ENCODE measurements at regions of chr12 and their contacts with region 1.

Region 1: DNA sequence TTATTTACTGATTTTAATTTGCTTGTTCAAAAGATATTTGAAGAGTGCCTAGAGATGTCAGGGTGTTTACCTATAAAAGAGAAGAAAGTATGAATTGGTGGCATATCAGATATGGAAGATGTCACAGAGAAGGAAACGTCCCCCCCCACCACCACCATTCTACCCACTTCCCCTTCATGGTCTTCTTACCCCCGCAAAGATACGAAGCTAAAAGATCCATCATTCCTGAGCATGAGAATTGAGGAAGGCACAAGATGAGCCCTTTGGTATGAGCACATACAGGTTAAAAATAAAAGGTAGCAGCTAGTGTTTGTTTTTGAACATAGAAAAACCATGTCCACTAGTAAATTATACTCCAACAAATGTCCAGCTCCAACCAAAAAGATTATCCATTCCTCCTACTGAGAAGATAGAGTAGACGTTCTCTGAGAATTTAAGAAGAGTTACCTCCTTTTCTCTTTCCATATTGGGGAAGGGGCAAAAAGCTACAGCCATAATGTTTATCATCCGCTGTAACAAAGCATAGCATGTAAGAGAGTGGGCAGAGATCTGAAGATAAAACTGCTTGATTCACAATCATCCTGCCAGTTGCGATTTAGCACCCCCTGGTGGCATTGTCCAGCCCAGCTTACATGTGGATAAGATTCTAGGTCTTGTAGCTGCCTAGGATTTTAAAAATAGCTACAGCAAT is 29.1 kb downstream of the NFYB start:
- DNase-seq: peak; percentile 76 to 85 (median 77)
- H3K4me3 ChIP-seq: no peak overlapping the region
- H3K4me3 Mint-ChIP-seq: no peak overlapping the region
- H3K27ac ChIP-seq: no peak overlapping the region
- H3K27ac Mint-ChIP-seq: peak overlapping the region in 3 of 7 donors; percentile 47 to 80 (median 49)
- H3K4me1 ChIP-seq: peaks cover 6% of the 10 kb centered on the region
- H3K4me1 Mint-ChIP-seq: peaks cover 10 to 17% (median 12%) of the 10 kb centered on the region in 4 donors
- H3K27me3 ChIP-seq: no peaks in the 10 kb centered on the region
- H3K27me3 Mint-ChIP-seq: no peaks in the 10 kb centered on the region

Region 2: GRCh38 chr12:103495479-103496456 is 613.1 kb before region 1 on chr12 and contains the start of gene C12orf42:
- CTCF ChIA-PET with region 1: no interaction called
- POLR2A ChIA-PET with region 1: no interaction called
- intact Hi-C with region 1: loop called (anchors 5 kb)
- DNase-seq: peak; percentile 44 to 59 (median 53)
- H3K4me3 ChIP-seq: peak within 1 kb of the TSS; percentile 31 to 51
- H3K4me3 Mint-ChIP-seq: peak within 1 kb of the TSS; percentile 77 to 93 (median 82)
- H3K27ac ChIP-seq: peak within 1 kb of the TSS; percentile 31
- H3K27ac Mint-ChIP-seq: peak within 1 kb of the TSS; percentile 22 to 86 (median 71)
- H3K4me1 ChIP-seq: peaks cover 9% of the 10 kb centered on the region
- H3K4me1 Mint-ChIP-seq: peaks cover 12 to 16% (median 15%) of the 10 kb centered on the region in 4 donors
- H3K27me3 ChIP-seq: peaks cover 4% of the 10 kb centered on the region
- H3K27me3 Mint-ChIP-seq: peaks cover 10 to 12% of the 10 kb centered on the region in 2 donors
- total RNA-seq, gene C12orf42: 8.4 to 12.8 TPM

Region 3: DNA sequence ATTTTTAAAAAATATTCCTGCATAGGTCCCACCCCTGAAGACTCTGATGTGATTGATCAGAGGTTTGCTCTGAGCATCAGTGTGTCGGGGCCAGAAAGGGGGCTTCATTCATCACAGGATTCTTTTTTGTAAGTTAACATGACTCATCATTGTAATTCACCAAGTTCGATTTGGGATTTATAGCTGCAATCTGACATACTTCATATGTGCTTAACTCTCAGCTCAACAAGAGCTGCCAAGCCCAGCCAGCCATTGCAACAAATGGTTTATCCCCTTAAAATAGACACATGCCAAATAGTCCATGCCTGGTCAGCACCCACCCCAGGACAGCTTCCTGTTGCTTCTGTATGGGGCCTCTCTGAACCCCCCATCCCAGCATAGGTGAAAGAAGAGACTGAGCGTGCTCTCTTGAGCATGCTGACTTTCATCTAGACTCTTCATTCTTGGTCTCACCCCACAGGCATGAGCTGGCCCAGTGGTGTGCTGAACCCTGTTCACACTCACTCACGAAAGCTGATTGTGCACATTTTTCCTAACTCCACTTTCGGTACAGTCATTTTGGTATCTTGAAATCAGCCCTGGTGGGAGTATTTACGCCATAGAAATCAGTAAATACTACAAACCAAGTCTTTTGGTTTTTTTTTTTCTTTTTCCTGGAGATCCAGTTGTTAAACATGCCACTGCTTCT is 420.4 kb before region 1 on chr12:
- CTCF ChIA-PET with region 1: no interaction called
- POLR2A ChIA-PET with region 1: no interaction called
- intact Hi-C with region 1: no loop called
- DNase-seq: no peak
- H3K4me3 ChIP-seq: no peak overlapping the region
- H3K4me3 Mint-ChIP-seq: no peak overlapping the region
- H3K27ac ChIP-seq: no peak overlapping the region
- H3K27ac Mint-ChIP-seq: no peak overlapping the region
- H3K4me1 ChIP-seq: no peaks in the 10 kb centered on the region
- H3K4me1 Mint-ChIP-seq: no peaks in the 10 kb centered on the region
- H3K27me3 ChIP-seq: no peaks in the 10 kb centered on the region
- H3K27me3 Mint-ChIP-seq: peaks cover 14 to 15% of the 10 kb centered on the region in 2 donors

Region 4: GRCh38 chr12:103884316-103884715 is 224.6 kb before region 1 on chr12:
- CTCF ChIA-PET with region 1: interaction called, 26 read pairs
- POLR2A ChIA-PET with region 1: no interaction called
- intact Hi-C with region 1: loop called (anchors 1 kb)
- DNase-seq: peak; percentile 33 to 52 (median 41)
- H3K4me3 ChIP-seq: no peak overlapping the region
- H3K4me3 Mint-ChIP-seq: peak overlapping the region in 1 of 8 donors; percentile 4
- H3K27ac ChIP-seq: no peak overlapping the region
- H3K27ac Mint-ChIP-seq: peak overlapping the region in 5 of 7 donors; percentile 12 to 44 (median 26)
- H3K4me1 ChIP-seq: peaks cover 4% of the 10 kb centered on the region
- H3K4me1 Mint-ChIP-seq: peaks cover 6 to 24% (median 12%) of the 10 kb centered on the region in 4 donors
- H3K27me3 ChIP-seq: no peaks in the 10 kb centered on the region
- H3K27me3 Mint-ChIP-seq: no peaks in the 10 kb centered on the region

Region 5: GRCh38 chr12:104064031-104064822 is 44.7 kb before region 1 on chr12 and contains the start of gene HCFC2:
- CTCF ChIA-PET with region 1: interaction called, 79 read pairs
- POLR2A ChIA-PET with region 1: interaction called, 13 read pairs
- intact Hi-C with region 1: no loop called
- DNase-seq: peak; percentile 83 to 91 (median 86)
- H3K4me3 ChIP-seq: peak within 1 kb of the TSS; percentile 91 to 98
- H3K4me3 Mint-ChIP-seq: peak within 1 kb of the TSS; percentile 91 to 97 (median 94)
- H3K27ac ChIP-seq: peak within 1 kb of the TSS; percentile 77
- H3K27ac Mint-ChIP-seq: peak within 1 kb of the TSS; percentile 85 to 95 (median 92)
- H3K4me1 ChIP-seq: peaks cover 21% of the 10 kb centered on the region
- H3K4me1 Mint-ChIP-seq: peaks cover 18 to 35% (median 23%) of the 10 kb centered on the region in 4 donors
- H3K27me3 ChIP-seq: peaks cover 5% of the 10 kb centered on the region
- H3K27me3 Mint-ChIP-seq: peaks cover 4 to 5% of the 10 kb centered on the region in 2 donors
- total RNA-seq, gene HCFC2: 18.1 to 18.5 TPM

Region 6: DNA sequence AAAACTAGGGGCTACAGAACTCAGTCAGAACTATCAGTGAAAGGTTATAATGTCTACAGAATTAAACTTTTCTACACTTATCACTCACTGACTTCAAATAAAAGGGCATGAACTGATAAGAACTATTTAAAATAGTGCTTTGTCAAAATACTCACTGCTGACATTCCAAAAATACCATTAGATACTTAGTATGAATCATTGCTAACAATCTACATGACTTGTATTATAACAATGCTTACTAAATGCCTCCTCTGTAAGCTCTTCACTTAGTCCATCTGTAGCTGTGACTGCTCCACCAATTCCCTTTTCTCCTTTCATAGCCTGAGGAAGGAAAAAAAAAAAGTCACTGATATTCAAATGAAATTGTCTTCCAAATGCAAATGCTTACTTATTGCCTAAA is 12.1 kb after region 1 on chr12:
- CTCF ChIA-PET with region 1: interaction called, 26 read pairs
- POLR2A ChIA-PET with region 1: interaction called, 3 read pairs
- intact Hi-C with region 1: no loop called
- DNase-seq: no peak
- H3K4me3 ChIP-seq: no peak overlapping the region
- H3K4me3 Mint-ChIP-seq: no peak overlapping the region
- H3K27ac ChIP-seq: no peak overlapping the region
- H3K27ac Mint-ChIP-seq: peak overlapping the region in 1 of 7 donors; percentile 9
- H3K4me1 ChIP-seq: no peaks in the 10 kb centered on the region
- H3K4me1 Mint-ChIP-seq: peaks cover 0 to 4% (median under 1%) of the 10 kb centered on the region in 4 donors
- H3K27me3 ChIP-seq: no peaks in the 10 kb centered on the region
- H3K27me3 Mint-ChIP-seq: no peaks in the 10 kb centered on the region

Region 7: GRCh38 chr12:104132351-104132956 is 23.6 kb after region 1 on chr12:
- CTCF ChIA-PET with region 1: interaction called, 13 read pairs
- POLR2A ChIA-PET with region 1: interaction called, 8 read pairs
- intact Hi-C with region 1: no loop called
- DNase-seq: no peak
- H3K4me3 ChIP-seq: no peak overlapping the region
- H3K4me3 Mint-ChIP-seq: peak overlapping the region in 1 of 8 donors; percentile 27
- H3K27ac ChIP-seq: no peak overlapping the region
- H3K27ac Mint-ChIP-seq: peak overlapping the region in 2 of 7 donors; percentile 44 to 62
- H3K4me1 ChIP-seq: peaks cover 47% of the 10 kb centered on the region
- H3K4me1 Mint-ChIP-seq: peaks cover 30 to 49% (median 34%) of the 10 kb centered on the region in 4 donors
- H3K27me3 ChIP-seq: no peaks in the 10 kb centered on the region
- H3K27me3 Mint-ChIP-seq: no peaks in the 10 kb centered on the region

Measured in CD4-positive, alpha-beta memory T cell (primary cell).